Panc1 (cell line): ENCODE measurements at regions of chr22 and their contacts with region 1.

Region 1: GRCh38 chr22:35705141-35705540 is 12.5 kb upstream of the APOL5 start:
- DNase-seq: no peak
- ATAC-seq: no peak
- H3K4me3 ChIP-seq: no peak overlapping the region
- H3K27ac ChIP-seq: no peak overlapping the region
- H3K4me1 ChIP-seq: no peaks in the 10 kb centered on the region
- H3K27me3 ChIP-seq: no peaks in the 10 kb centered on the region
- CTCF ChIP-seq: no peak

Region 2: GRCh38 chr22:34943830-34944229 is 761.3 kb before region 1 on chr22:
- CTCF ChIA-PET with region 1: no interaction called
- POLR2A ChIA-PET with region 1: no interaction called
- in situ Hi-C with region 1: no loop called
- intact Hi-C with region 1: no loop called
- DNase-seq: no peak
- ATAC-seq: no peak
- H3K4me3 ChIP-seq: no peak overlapping the region
- H3K27ac ChIP-seq: no peak overlapping the region
- H3K4me1 ChIP-seq: no peaks in the 10 kb centered on the region
- H3K27me3 ChIP-seq: no peaks in the 10 kb centered on the region
- CTCF ChIP-seq: no peak; the same call in 1 of the 2 replicates

Region 3: DNA sequence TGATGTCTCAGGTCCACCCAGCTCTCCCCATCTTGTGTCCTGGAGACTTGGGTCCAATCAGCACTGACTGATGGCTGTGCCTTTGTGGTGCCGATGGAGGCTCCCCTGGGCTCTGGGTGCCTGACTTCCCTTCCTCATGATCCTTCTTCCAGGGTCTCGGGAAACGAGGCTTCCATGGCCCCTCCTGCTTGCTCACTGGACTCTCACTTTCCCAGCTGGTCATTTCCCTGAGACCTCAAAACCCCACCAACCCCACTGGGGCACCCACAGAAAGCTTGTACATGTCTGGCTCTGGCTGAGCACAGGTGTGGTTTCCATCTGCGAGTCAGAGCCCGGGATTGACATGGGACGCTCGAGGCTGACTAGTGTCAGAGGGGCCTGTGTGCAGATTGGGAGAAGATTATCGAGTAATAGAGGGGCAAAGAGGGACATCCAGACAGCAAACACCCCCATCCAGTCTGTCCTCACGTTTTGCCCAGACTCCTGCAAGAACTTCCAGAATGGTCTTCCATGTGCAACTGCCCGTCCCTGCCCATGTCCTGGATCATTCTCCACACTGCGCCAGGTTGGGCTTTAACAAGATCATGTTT is 562.9 kb after region 1 on chr22:
- CTCF ChIA-PET with region 1: no interaction called
- POLR2A ChIA-PET with region 1: interaction called, 21 read pairs
- in situ Hi-C with region 1: no loop called
- intact Hi-C with region 1: no loop called
- DNase-seq: no peak
- ATAC-seq: no peak
- H3K4me3 ChIP-seq: no peak overlapping the region
- H3K27ac ChIP-seq: no peak overlapping the region
- H3K4me1 ChIP-seq: no peaks in the 10 kb centered on the region
- H3K27me3 ChIP-seq: no peaks in the 10 kb centered on the region
- CTCF ChIP-seq: no peak